CD8-positive, alpha-beta T cell (primary cell): ENCODE measurements at regions of chr15 and their contacts with region 1.

Region 1: GRCh38 chr15:35958021-35958420 is 412.1 kb upstream of the DPH6 start:
- DNase-seq: no peak
- ATAC-seq: no peak
- H3K4me3 ChIP-seq: no peak overlapping the region
- H3K4me3 Mint-ChIP-seq: no peak overlapping the region
- H3K27ac ChIP-seq: no peak overlapping the region
- H3K27ac Mint-ChIP-seq: no peak overlapping the region
- H3K4me1 ChIP-seq: no peaks in the 10 kb centered on the region
- H3K4me1 Mint-ChIP-seq: no peaks in the 10 kb centered on the region
- H3K27me3 ChIP-seq: no peaks in the 10 kb centered on the region
- H3K27me3 Mint-ChIP-seq: no peaks in the 10 kb centered on the region
- CTCF ChIP-seq: no peak

Region 2: GRCh38 chr15:35771746-35772442 is 186.1 kb before region 1 on chr15:
- CTCF ChIA-PET with region 1: no interaction called
- POLR2A ChIA-PET with region 1: no interaction called
- intact Hi-C with region 1: loop called in 1 of 2 experiments (anchors 2 kb)
- DNase-seq: no peak
- ATAC-seq: no peak
- H3K4me3 ChIP-seq: no peak overlapping the region
- H3K4me3 Mint-ChIP-seq: no peak overlapping the region
- H3K27ac ChIP-seq: no peak overlapping the region
- H3K27ac Mint-ChIP-seq: no peak overlapping the region
- H3K4me1 ChIP-seq: no peaks in the 10 kb centered on the region
- H3K4me1 Mint-ChIP-seq: no peaks in the 10 kb centered on the region
- H3K27me3 ChIP-seq: no peaks in the 10 kb centered on the region
- H3K27me3 Mint-ChIP-seq: peaks cover 5% of the 10 kb centered on the region
- CTCF ChIP-seq: no peak

Region 3: DNA sequence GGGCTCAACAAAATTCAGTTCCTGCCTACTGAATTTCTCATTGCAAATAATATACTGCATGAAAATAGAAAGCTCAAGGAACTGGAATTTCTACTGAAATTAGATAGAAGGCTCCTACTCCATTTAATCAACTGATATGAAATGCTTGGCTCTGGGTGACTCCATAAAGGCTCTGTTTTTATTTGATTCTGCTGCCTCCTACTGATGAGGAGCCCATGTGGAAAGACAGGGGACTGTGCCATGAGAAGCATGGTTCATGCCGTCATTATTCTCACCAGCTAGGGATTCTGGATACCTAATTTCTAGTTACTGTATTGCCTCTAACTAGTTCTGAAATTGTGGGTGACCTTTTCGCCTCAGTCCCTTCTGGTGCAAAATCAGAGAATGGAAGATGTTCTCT is 45.8 kb before region 1 on chr15:
- CTCF ChIA-PET with region 1: no interaction called
- POLR2A ChIA-PET with region 1: no interaction called
- intact Hi-C with region 1: loop called in 1 of 2 experiments (anchors 5 kb)
- DNase-seq: no peak
- ATAC-seq: no peak
- H3K4me3 ChIP-seq: no peak overlapping the region
- H3K4me3 Mint-ChIP-seq: no peak overlapping the region
- H3K27ac ChIP-seq: no peak overlapping the region
- H3K27ac Mint-ChIP-seq: no peak overlapping the region
- H3K4me1 ChIP-seq: no peaks in the 10 kb centered on the region
- H3K4me1 Mint-ChIP-seq: no peaks in the 10 kb centered on the region
- H3K27me3 ChIP-seq: no peaks in the 10 kb centered on the region
- H3K27me3 Mint-ChIP-seq: peaks cover 2% of the 10 kb centered on the region
- CTCF ChIP-seq: no peak